ENCODE measurements at regions of chr2 and their contacts with region 1.

Region 1: GRCh38 chr2:105238664-105239240 is 2.8 kb upstream of the GPR45 start:
- DNase-seq: no peak
- ATAC-seq: no peak

Region 2: GRCh38 chr2:105114551-105114950 is 124.2 kb before region 1 on chr2:
- intact Hi-C with region 1: loop called (anchors 1 kb)
- DNase-seq: no peak
- ATAC-seq: no peak

Region 3: DNA sequence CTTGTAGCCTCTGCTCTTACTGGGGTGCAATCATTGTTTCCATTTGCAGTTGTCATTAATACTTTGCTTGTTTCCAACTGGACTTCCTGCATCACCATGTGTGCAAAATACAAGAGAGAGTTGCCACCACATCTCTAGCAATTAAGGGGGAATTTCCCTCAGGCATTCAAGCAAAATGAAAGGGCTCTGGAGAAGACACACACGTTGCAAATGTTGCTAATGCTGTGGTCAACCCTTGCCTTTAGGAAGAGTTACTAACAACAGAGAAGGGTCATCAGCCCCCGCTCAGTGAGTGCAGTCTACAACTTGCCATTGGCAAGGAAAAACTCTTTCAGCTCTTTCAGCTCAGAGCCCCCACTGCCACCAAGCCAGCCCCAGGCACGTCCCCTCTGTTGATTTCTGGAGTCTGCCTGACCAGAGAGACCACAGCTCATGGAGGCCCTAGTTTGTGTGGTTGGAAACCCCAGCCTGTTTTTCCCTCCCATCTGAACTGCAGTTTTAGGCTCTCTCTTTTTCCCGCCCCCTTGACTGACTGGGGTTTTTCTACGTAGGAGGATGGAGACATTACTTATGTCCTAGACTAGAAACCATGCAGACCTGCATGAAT is 23.1 kb before region 1 on chr2:
- intact Hi-C with region 1: no loop called
- DNase-seq: no peak
- ATAC-seq: no peak

Measured in Right ventricle myocardium inferior (tissue), 1 donor.